CD8-positive, alpha-beta T cell (primary cell): ENCODE measurements at regions of chr15 and their contacts with region 1.

Region 1: GRCh38 chr15:45457641-45458433 is 64.7 kb downstream of the SLC30A4 start:
- DNase-seq: peak; percentile 43 to 90 (median 79)
- ATAC-seq: peak; percentile 65
- H3K4me3 ChIP-seq: peak overlapping the region; percentile 53 to 57
- H3K4me3 Mint-ChIP-seq: peak overlapping the region; percentile 84
- H3K27ac ChIP-seq: peak overlapping the region; percentile 24 to 61
- H3K27ac Mint-ChIP-seq: peak overlapping the region; percentile 87
- H3K4me1 ChIP-seq: peaks cover 24% of the 10 kb centered on the region
- H3K4me1 Mint-ChIP-seq: peaks cover 42% of the 10 kb centered on the region
- H3K27me3 ChIP-seq: no peaks in the 10 kb centered on the region
- H3K27me3 Mint-ChIP-seq: no peaks in the 10 kb centered on the region
- CTCF ChIP-seq: peak; percentile 93

Region 2: GRCh38 chr15:45126535-45127158 is 331.2 kb before region 1 on chr15:
- CTCF ChIA-PET with region 1: interaction called, 3 read pairs
- POLR2A ChIA-PET with region 1: no interaction called
- intact Hi-C with region 1: loop called in 1 of 2 experiments (anchors 5 kb)
- DNase-seq: peak in 5 of 9 experiments; percentile 36 to 68 (median 52)
- ATAC-seq: peak; percentile 60
- H3K4me3 ChIP-seq: no peak overlapping the region
- H3K4me3 Mint-ChIP-seq: no peak overlapping the region
- H3K27ac ChIP-seq: no peak overlapping the region
- H3K27ac Mint-ChIP-seq: no peak overlapping the region
- H3K4me1 ChIP-seq: no peaks in the 10 kb centered on the region
- H3K4me1 Mint-ChIP-seq: peaks cover 5% of the 10 kb centered on the region
- H3K27me3 ChIP-seq: peaks cover 9 to 28% of the 10 kb centered on the region in 2 experiments
- H3K27me3 Mint-ChIP-seq: peaks cover 64% of the 10 kb centered on the region
- CTCF ChIP-seq: peak; percentile 59

Region 3: DNA sequence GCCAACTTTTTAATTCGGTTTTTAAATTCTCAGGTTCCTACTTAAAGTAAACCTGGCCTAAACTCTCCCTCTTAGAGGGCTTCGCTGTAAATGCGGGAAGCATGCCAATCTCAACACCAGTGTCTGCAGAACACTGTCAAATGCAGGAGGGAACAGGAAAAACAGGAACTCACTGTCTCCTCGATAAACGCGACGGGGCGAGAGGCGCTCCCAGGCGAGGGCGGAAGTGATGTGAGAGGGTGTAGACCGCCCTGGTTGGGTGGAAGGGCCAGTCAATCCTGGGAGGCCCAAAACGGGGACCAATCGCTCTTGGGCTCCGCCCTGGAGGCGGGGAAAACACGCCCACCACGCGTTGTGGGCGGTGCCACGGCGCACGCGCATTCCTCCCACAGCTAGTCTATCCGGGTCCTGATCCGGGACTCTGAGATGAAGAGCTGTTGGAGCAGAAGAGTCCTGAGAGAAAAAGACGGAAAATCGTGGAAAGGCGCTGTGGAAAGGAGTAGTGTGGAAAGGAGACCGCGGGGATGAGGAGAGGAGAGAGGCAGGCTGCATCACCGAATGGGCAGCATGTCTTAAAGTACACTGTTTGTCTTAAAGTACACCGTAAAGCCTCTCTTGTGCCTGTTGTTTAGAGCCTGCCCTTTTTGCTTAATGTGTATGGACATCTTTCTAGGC is 178.7 kb before region 1 on chr15:
- CTCF ChIA-PET with region 1: interaction called, 4 read pairs
- POLR2A ChIA-PET with region 1: no interaction called
- intact Hi-C with region 1: loop called in 1 of 2 experiments (anchors 1 kb)
- DNase-seq: peak; percentile 95 to 99 (median 97)
- ATAC-seq: peak; percentile 99
- H3K4me3 ChIP-seq: peak overlapping the region; percentile 61 to 69
- H3K4me3 Mint-ChIP-seq: peak overlapping the region; percentile 91
- H3K27ac ChIP-seq: peak overlapping the region; percentile 66 to 85
- H3K27ac Mint-ChIP-seq: peak overlapping the region; percentile 94
- H3K4me1 ChIP-seq: peaks cover 15% of the 10 kb centered on the region
- H3K4me1 Mint-ChIP-seq: peaks cover 22% of the 10 kb centered on the region
- H3K27me3 ChIP-seq: no peaks in the 10 kb centered on the region
- H3K27me3 Mint-ChIP-seq: peaks cover 1% of the 10 kb centered on the region
- CTCF ChIP-seq: no peak

Region 4: GRCh38 chr15:45424429-45424828 is 33.4 kb before region 1 on chr15:
- CTCF ChIA-PET with region 1: interaction called, 68 read pairs
- POLR2A ChIA-PET with region 1: interaction called, 3 read pairs
- intact Hi-C with region 1: loop called (anchors 5 kb)
- DNase-seq: no peak
- ATAC-seq: no peak
- H3K4me3 ChIP-seq: no peak overlapping the region
- H3K4me3 Mint-ChIP-seq: no peak overlapping the region
- H3K27ac ChIP-seq: no peak overlapping the region
- H3K27ac Mint-ChIP-seq: no peak overlapping the region
- H3K4me1 ChIP-seq: no peaks in the 10 kb centered on the region
- H3K4me1 Mint-ChIP-seq: no peaks in the 10 kb centered on the region
- H3K27me3 ChIP-seq: no peaks in the 10 kb centered on the region
- H3K27me3 Mint-ChIP-seq: no peaks in the 10 kb centered on the region
- CTCF ChIP-seq: no peak

Region 5: GRCh38 chr15:45439521-45440260 is 18.1 kb before region 1 on chr15:
- CTCF ChIA-PET with region 1: interaction called, 19 read pairs
- POLR2A ChIA-PET with region 1: no interaction called
- intact Hi-C with region 1: no loop called
- DNase-seq: no peak
- ATAC-seq: no peak
- H3K4me3 ChIP-seq: no peak overlapping the region
- H3K4me3 Mint-ChIP-seq: no peak overlapping the region
- H3K27ac ChIP-seq: no peak overlapping the region
- H3K27ac Mint-ChIP-seq: no peak overlapping the region
- H3K4me1 ChIP-seq: no peaks in the 10 kb centered on the region
- H3K4me1 Mint-ChIP-seq: no peaks in the 10 kb centered on the region
- H3K27me3 ChIP-seq: no peaks in the 10 kb centered on the region
- H3K27me3 Mint-ChIP-seq: no peaks in the 10 kb centered on the region
- CTCF ChIP-seq: no peak

Region 6: GRCh38 chr15:45522328-45523160 is 64.7 kb after region 1 on chr15 and contains the start of gene SLC30A4:
- CTCF ChIA-PET with region 1: interaction called, 3 read pairs
- POLR2A ChIA-PET with region 1: no interaction called
- intact Hi-C with region 1: loop called (anchors 2 kb)
- DNase-seq: peak; percentile 16 to 87 (median 66)
- ATAC-seq: peak; percentile 85
- H3K4me3 ChIP-seq: peak within 1 kb of the TSS; percentile 71 to 85
- H3K4me3 Mint-ChIP-seq: peak within 1 kb of the TSS; percentile 94
- H3K27ac ChIP-seq: peak within 1 kb of the TSS; percentile 31 to 63
- H3K27ac Mint-ChIP-seq: peak within 1 kb of the TSS; percentile 88
- H3K4me1 ChIP-seq: peaks cover 10% of the 10 kb centered on the region
- H3K4me1 Mint-ChIP-seq: peaks cover 32% of the 10 kb centered on the region
- H3K27me3 ChIP-seq: no peaks in the 10 kb centered on the region
- H3K27me3 Mint-ChIP-seq: no peaks in the 10 kb centered on the region
- CTCF ChIP-seq: peak; percentile 67
- total RNA-seq, gene SLC30A4: 1.8 to 2.0 TPM

Region 7: GRCh38 chr15:45611305-45611704 is 153.5 kb after region 1 on chr15:
- CTCF ChIA-PET with region 1: interaction called, 50 read pairs
- POLR2A ChIA-PET with region 1: interaction called, 3 read pairs
- intact Hi-C with region 1: loop called (anchors 1 kb)
- DNase-seq: peak in 2 of 9 experiments; percentile 25 to 37
- ATAC-seq: no peak
- H3K4me3 ChIP-seq: no peak overlapping the region
- H3K4me3 Mint-ChIP-seq: no peak overlapping the region
- H3K27ac ChIP-seq: no peak overlapping the region
- H3K27ac Mint-ChIP-seq: peak overlapping the region; percentile 38
- H3K4me1 ChIP-seq: no peaks in the 10 kb centered on the region
- H3K4me1 Mint-ChIP-seq: peaks cover 3% of the 10 kb centered on the region
- H3K27me3 ChIP-seq: no peaks in the 10 kb centered on the region
- H3K27me3 Mint-ChIP-seq: no peaks in the 10 kb centered on the region
- CTCF ChIP-seq: peak; percentile 62

Region 8: DNA sequence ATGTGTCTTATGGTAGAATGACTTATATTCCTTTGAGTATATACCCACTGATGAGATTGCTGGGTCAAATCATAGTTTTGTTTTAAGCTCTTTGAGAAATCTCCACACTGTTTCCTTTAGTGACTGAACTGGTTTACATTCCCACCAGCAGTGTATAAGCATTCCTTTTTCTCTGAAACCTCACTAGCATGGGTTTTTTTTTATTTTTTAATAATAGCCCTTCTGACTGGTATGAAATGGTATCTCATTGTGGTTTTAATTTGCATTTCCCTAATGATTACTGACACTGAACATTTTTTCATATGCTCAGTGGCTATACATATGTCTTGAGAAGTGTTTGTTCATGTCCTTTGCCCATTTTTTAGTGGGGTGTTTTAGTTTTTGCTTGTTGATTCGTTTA is 671.3 kb after region 1 on chr15:
- CTCF ChIA-PET with region 1: no interaction called
- POLR2A ChIA-PET with region 1: no interaction called
- intact Hi-C with region 1: no loop called
- DNase-seq: no peak
- ATAC-seq: no peak
- H3K4me3 ChIP-seq: no peak overlapping the region
- H3K4me3 Mint-ChIP-seq: no peak overlapping the region
- H3K27ac ChIP-seq: no peak overlapping the region
- H3K27ac Mint-ChIP-seq: no peak overlapping the region
- H3K4me1 ChIP-seq: no peaks in the 10 kb centered on the region
- H3K4me1 Mint-ChIP-seq: no peaks in the 10 kb centered on the region
- H3K27me3 ChIP-seq: no peaks in the 10 kb centered on the region
- H3K27me3 Mint-ChIP-seq: no peaks in the 10 kb centered on the region
- CTCF ChIP-seq: no peak